Mucosa of descending colon (tissue), 3 donors: ENCODE measurements at regions of chr5 and their contacts with region 1.

Region 1: GRCh38 chr5:72523960-72524582 is 16.9 kb upstream of the ZNF366 start:
- DNase-seq: peak in 1 of 3 donors; percentile 71
- ATAC-seq: peak; percentile 74
- H3K4me3 ChIP-seq: no peak overlapping the region
- H3K4me1 ChIP-seq: no peaks in the 10 kb centered on the region
- CTCF ChIP-seq: no peak

Region 2: GRCh38 chr5:72280581-72281170 is 243.4 kb before region 1 on chr5:
- intact Hi-C with region 1: no loop called
- DNase-seq: peak in 1 of 3 donors; percentile 16
- ATAC-seq: no peak
- H3K4me3 ChIP-seq: no peak overlapping the region
- H3K4me1 ChIP-seq: no peaks in the 10 kb centered on the region
- CTCF ChIP-seq: no peak

Region 3: DNA sequence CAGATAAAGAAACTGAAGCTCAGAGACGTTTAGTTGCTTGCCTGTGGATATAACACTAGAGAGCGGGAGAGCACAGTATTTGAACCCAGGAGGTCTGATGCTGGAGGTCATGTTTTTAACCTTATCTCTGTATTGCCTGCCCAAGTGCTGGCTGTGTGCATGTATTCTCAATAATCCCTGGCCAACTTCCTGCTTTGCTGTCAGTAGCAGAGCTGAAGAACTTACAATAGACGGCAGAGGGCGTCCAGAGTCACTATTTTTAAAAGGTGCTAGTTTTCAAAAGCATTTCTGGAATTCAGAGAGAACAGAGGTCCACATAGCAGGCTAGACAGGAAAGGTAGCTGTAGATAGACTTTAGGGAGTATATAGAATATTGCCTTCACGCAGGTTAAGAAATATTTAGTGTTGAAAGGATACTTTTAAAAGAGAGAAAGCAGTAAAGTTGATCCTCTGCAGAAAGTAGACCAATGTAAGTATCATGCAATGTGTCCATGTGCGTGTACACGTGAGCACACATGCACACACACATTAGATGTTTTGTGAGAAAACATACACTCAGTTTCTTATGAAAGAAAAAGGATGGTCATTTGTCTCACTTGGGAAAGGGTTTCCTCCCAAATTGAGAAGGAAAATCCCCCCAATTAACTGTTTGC is 157.6 kb before region 1 on chr5:
- intact Hi-C with region 1: loop called (anchors 2 to 5 kb)
- DNase-seq: peak in 1 of 3 donors; percentile 87
- ATAC-seq: peak; percentile 97
- H3K4me3 ChIP-seq: no peak overlapping the region
- H3K4me1 ChIP-seq: no peaks in the 10 kb centered on the region
- CTCF ChIP-seq: peak; percentile 43